ENCODE measurements at regions of chr12 and their contacts with region 1.

Region 1: DNA sequence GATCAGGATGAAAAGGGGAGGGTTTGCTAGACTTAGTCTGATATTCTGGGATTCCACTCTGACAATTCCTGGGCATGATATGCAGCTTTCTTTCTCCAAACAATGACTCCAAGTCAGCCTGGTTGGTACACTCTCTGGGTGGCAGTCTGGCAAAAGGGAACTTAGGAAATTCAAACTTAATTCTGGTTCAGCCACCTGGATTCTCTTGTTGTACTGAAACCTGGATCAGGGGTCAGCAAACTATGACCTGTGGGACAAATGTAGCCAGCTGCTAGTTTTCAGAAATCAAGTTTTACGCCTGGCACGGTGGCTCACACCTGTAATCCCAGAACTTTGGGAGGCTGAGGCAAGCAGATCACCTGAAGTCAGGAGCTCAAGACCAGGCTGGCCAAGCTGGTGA is 6.2 kb downstream of the AMN1 start:
- DNase-seq: peak in 1 of 2 donors; percentile 6
- ATAC-seq: no peak
- H3K4me3 ChIP-seq: no peak overlapping the region
- H3K4me3 Mint-ChIP-seq: peak overlapping the region; percentile 87
- H3K27ac ChIP-seq: peak overlapping the region; percentile 5
- H3K27ac Mint-ChIP-seq: peak overlapping the region; percentile 89
- H3K4me1 ChIP-seq: peaks cover 32% of the 10 kb centered on the region
- H3K4me1 Mint-ChIP-seq: peaks cover 45 to 55% of the 10 kb centered on the region in 2 donors
- H3K27me3 ChIP-seq: no peaks in the 10 kb centered on the region
- H3K27me3 Mint-ChIP-seq: peaks cover 7 to 12% of the 10 kb centered on the region in 2 donors
- CTCF ChIP-seq: no peak

Region 2: GRCh38 chr12:31931796-31932715 is 209.5 kb after region 1 on chr12:
- intact Hi-C with region 1: loop called (anchors 1 kb)
- DNase-seq: peak; percentile 49 to 69
- ATAC-seq: peak; percentile 93 to 98 (median 94)
- H3K4me3 ChIP-seq: no peak overlapping the region
- H3K4me3 Mint-ChIP-seq: peak overlapping the region; percentile 41
- H3K27ac ChIP-seq: peak overlapping the region; percentile 53
- H3K27ac Mint-ChIP-seq: peak overlapping the region; percentile 62 to 81
- H3K4me1 ChIP-seq: peaks cover 47% of the 10 kb centered on the region
- H3K4me1 Mint-ChIP-seq: peaks cover 51 to 58% of the 10 kb centered on the region in 2 donors
- H3K27me3 ChIP-seq: no peaks in the 10 kb centered on the region
- H3K27me3 Mint-ChIP-seq: no peaks in the 10 kb centered on the region
- CTCF ChIP-seq: no peak

Measured in natural killer cell (primary cell).